ENCODE measurements at regions of chr11 and their contacts with region 1.

Region 1: GRCh38 chr11:4636962-4637661 is at the start of gene OR51D1:
- DNase-seq: peak; percentile 65
- H3K4me3 ChIP-seq: no peak within 1 kb of the TSS
- H3K27ac ChIP-seq: no peak within 1 kb of the TSS
- H3K4me1 ChIP-seq: no peaks in the 10 kb centered on the region
- H3K27me3 ChIP-seq: no peaks in the 10 kb centered on the region
- CTCF ChIP-seq: peak; percentile 87
- total RNA-seq, gene OR51D1: not detected

Region 2: DNA sequence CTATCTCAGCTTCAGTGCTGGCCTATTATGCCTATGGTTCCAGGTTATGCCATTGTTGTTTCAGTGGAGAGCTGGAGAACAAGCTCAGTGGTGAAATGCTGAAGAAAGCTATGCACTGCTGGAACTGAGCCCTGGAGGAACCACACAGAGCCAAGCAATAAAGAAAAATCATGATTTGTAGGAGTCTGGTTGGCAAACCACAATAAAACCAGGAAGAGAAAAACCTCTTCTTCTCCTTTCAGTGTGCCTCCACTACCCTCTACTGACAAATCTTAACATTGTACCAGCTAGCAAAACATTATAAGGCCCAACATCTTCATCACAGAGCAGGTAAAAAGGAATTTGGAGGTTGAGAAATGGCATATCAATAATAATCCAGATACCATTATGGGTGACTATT is 189.3 kb after region 1 on chr11:
- intact Hi-C with region 1: loop called (anchors 5 kb)
- DNase-seq: no peak
- H3K4me3 ChIP-seq: no peak overlapping the region
- H3K27ac ChIP-seq: no peak overlapping the region
- H3K4me1 ChIP-seq: no peaks in the 10 kb centered on the region
- H3K27me3 ChIP-seq: no peaks in the 10 kb centered on the region
- CTCF ChIP-seq: peak; percentile 27

Region 3: DNA sequence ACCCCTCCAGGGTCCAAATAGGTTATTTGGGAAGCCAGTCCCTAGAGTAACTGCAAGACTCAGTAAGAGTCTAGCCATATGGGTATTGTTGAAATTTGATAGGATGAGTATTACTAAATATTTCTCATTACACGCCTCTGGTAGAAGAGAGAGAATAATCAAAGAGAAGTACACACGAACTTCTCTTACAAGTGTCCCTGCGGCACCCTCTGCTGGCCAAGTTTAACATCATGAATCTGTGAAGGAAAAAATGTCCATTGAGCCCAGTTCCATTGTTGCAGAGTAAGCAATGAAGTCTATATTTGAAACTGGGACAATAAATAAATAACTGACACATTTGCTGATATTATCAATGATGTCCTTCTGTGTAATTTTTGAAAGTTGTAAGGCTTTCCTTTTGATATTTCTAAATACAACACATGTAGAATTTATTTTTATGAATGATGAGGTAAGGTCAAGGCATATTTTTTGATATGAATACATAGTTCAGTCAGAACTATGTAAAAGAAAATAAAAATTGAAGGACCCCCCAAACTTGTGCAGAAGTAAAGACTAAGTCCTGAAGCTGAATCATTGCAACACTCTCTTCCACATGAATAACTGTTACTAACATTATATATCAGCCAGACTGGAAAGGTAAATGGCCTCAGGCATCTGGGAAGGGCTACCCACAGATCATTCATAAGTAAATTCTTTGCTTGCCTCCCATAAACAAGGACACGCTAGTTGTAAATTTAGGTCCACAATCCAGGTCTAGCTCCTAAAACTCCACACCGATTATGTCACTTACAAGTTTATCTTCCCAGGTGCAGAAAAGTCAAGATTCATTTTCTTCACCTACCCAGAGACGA is 367.5 kb after region 1 on chr11:
- intact Hi-C with region 1: loop called (anchors 2 kb)
- DNase-seq: peak; percentile 49
- H3K4me3 ChIP-seq: no peak overlapping the region
- H3K27ac ChIP-seq: no peak overlapping the region
- H3K4me1 ChIP-seq: no peaks in the 10 kb centered on the region
- H3K27me3 ChIP-seq: no peaks in the 10 kb centered on the region
- CTCF ChIP-seq: peak; percentile 30

Measured in colonic mucosa (tissue), 4 donors.